ENCODE measurements at regions of chr17 and their contacts with region 1.

Region 1: DNA sequence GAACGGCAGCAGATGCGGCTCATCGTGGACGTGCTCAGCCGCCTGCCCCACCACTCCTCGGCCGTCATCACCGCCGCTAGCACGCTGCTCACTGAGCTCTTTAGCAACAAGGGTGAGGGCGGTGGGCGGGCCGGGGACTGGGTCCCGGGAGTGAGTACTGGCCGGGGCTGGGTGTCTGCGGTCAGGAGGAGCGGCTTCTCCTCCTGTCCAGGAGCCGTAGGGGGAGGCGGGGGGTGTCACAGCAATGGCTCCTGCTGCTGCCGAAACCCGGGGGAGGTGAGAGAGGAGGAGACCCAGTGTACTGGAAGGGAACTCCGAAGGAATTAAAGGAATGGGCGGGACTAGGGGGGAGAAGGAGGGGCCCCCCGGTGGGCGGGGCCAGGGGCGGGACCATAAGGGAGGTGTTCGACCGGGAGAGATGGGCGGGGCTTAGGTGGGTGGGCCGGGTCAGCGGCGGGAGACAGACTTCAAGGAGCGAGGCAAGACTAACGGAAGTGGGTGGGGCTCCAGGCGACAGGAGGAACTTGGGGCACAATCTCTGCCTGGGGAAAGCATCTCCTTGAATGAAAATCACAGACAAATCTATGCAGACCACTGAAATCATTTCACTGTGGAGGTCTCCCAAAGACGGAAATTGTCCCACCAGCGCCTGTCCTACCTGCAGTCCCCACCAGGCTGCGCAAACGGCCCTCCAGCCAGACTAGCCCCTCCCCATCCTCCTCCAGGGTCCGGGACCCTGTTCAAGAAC is 2.4 kb downstream of the NAGS start:
- DNase-seq: peak; percentile 94 to 98
- H3K4me3 ChIP-seq: peak overlapping the region; percentile 72 to 86 (median 82)
- H3K27ac ChIP-seq: no peak overlapping the region
- H3K4me1 ChIP-seq: peaks cover 0 to 19% (median 13%) of the 10 kb centered on the region in 4 experiments; a peak in 6 of 7 replicates
- H3K27me3 ChIP-seq: peaks cover 0 to 21% (median 17%) of the 10 kb centered on the region in 4 experiments; a peak in 6 of 7 replicates
- CTCF ChIP-seq: peak; percentile 61 to 78 (median 76)
- EP300 ChIP-seq: no peak
- POLR2A ChIP-seq: no peak; a peak in 1 of 3 replicates
- RAD21 ChIP-seq: peak; percentile 42 to 55; a peak in 3 of 4 replicates

Region 2: DNA sequence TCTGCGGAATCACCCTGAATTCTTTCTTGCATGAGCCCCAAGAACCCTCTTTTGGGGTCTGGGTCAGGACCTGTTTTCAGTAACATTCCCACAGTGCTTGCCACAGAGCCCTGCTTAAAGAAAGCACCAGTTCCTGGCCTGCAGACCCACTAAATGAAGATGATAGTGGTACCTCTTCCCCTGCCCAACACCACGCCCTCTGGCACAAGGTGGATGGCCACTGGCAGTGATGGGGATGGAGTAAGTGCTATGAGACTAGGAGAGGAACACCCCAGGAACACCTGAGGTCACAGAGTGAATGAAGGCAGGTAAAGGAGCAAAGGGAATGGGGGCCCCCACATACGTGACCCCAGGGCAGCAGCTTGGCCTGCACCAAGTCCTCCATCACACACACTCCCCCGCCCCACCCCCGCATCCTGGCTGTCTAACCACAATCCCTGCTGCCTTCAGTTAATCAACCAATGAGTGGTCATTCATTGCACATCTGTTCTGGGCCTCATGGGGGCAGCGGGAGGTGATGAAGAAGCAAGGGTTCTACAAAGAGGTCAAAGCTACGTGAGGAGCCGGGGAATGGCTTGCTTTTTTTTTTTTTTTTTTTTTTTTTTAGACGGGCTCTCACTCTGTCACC is 60.6 kb before region 1 on chr17:
- CTCF ChIA-PET with region 1: interaction called, 416 read pairs
- POLR2A ChIA-PET with region 1: interaction called, 7 read pairs
- DNase-seq: no peak
- H3K4me3 ChIP-seq: no peak overlapping the region
- H3K27ac ChIP-seq: no peak overlapping the region
- H3K4me1 ChIP-seq: peaks cover 0 to 2% (median 0%) of the 10 kb centered on the region in 4 experiments; a peak in 2 of 7 replicates
- H3K27me3 ChIP-seq: no peaks in the 10 kb centered on the region; a peak in 2 of 7 replicates
- CTCF ChIP-seq: peak; percentile 22 to 29 (median 24); a peak in 3 of 4 replicates
- EP300 ChIP-seq: no peak
- POLR2A ChIP-seq: no peak
- RAD21 ChIP-seq: peak; percentile 21 to 46; a peak in 2 of 4 replicates

Region 3: DNA sequence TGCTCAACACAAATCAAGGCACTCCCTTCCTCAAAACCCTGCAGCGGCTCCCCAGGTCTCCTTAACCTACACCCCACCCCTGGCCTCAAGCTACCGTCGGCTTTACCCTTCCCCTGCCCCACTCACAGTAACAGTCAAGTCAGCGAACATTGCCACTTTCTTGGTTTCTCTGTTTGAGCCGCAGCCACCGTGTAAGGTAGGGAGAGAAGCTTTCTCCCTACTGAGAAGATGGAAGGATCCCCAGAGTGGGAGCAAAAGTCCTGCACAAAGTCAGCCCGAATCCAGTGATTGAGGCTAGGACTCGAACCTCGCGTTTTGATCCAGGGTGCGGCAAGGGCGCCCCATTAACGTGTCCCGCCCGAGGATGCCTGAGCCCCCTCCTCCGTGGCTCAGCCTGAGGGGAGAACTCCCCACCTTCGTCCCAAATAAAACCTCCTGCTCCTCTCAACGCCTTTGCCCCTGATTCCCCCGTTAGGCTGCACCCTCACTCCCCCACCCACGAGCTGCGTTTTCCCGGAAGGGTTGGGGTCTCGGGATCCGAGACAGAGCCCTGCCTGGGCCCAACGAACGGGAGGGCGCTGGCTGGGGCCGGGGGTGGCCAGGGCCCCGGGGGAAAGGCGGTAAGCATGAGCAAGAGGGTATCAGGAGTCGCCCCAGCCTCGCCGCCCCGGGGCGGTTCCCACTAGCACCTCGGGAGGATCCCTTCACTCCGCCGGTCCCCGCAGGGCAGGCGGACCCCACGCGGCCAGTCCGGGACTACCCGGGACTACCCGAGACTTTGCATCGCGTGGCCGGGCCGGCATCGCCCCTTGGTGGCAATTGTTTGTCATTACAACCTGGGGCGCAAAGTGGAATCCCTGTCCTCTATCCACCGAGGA is 12.3 kb before region 1 on chr17:
- CTCF ChIA-PET with region 1: interaction called, 67 read pairs
- POLR2A ChIA-PET with region 1: interaction called, 17 read pairs
- DNase-seq: peak in 1 of 2 experiments; percentile 92
- H3K4me3 ChIP-seq: peak overlapping the region; percentile 12 to 67 (median 42)
- H3K27ac ChIP-seq: no peak overlapping the region
- H3K4me1 ChIP-seq: peaks cover 0 to 2% (median 0%) of the 10 kb centered on the region in 4 experiments; a peak in 1 of 7 replicates
- H3K27me3 ChIP-seq: peaks cover 0 to 9% (median 4%) of the 10 kb centered on the region in 4 experiments; a peak in 5 of 7 replicates
- CTCF ChIP-seq: peak; percentile 81 to 97 (median 83)
- EP300 ChIP-seq: no peak
- POLR2A ChIP-seq: no peak
- RAD21 ChIP-seq: peak; percentile 91 to 94

Region 4: DNA sequence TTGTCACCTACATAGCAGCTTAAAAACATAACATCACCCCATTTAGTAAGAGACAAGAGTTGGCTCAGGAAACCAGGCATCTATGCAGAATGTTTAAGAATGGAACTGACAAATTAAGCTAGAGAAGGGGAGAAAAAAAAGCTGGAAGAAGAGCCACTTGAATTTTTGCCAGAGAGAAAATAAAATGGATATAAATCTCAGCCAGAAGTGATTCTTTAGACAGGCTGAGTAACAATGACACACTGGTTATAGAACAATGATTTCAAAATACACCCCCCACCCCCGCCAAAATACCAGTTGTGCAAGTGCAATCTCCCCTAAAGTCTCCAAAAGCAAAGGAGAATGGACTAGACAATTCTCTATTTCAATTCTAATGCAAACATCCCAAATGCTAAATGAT is 37.3 kb after region 1 on chr17:
- CTCF ChIA-PET with region 1: interaction called, 42 read pairs
- POLR2A ChIA-PET with region 1: interaction called, 9 read pairs
- DNase-seq: no peak
- H3K4me3 ChIP-seq: no peak overlapping the region
- H3K27ac ChIP-seq: no peak overlapping the region
- H3K4me1 ChIP-seq: no peaks in the 10 kb centered on the region
- H3K27me3 ChIP-seq: no peaks in the 10 kb centered on the region
- CTCF ChIP-seq: no peak
- EP300 ChIP-seq: no peak
- POLR2A ChIP-seq: no peak
- RAD21 ChIP-seq: no peak